Gastrocnemius medialis (tissue), 4 donors: ENCODE measurements at regions of chr4 and their contacts with region 1.

Region 1: GRCh38 chr4:158809611-158810486 is 41.0 kb downstream of the FNIP2 start:
- DNase-seq: peak; percentile 37 to 58
- ATAC-seq: peak; percentile 73 to 80
- H3K4me3 ChIP-seq: peak overlapping the region; percentile 14 to 23 (median 16)
- H3K27ac ChIP-seq: peak overlapping the region; percentile 80 to 92 (median 90)
- H3K4me1 ChIP-seq: peaks cover 79 to 83% of the 10 kb centered on the region in 2 donors
- H3K27me3 ChIP-seq: no peaks in the 10 kb centered on the region
- CTCF ChIP-seq: no peak
- POLR2A ChIP-seq: peak; percentile 15 to 27

Region 2: GRCh38 chr4:158823461-158823873 is 13.6 kb after region 1 on chr4:
- in situ Hi-C with region 1: no loop called
- intact Hi-C with region 1: loop called (anchors 1 kb)
- DNase-seq: peak; percentile 22 to 50
- ATAC-seq: peak; percentile 85 to 87
- H3K4me3 ChIP-seq: no peak overlapping the region
- H3K27ac ChIP-seq: peak overlapping the region; percentile 74 to 82 (median 80)
- H3K4me1 ChIP-seq: peaks cover 74 to 76% of the 10 kb centered on the region in 2 donors
- H3K27me3 ChIP-seq: no peaks in the 10 kb centered on the region
- CTCF ChIP-seq: no peak
- POLR2A ChIP-seq: no peak